ENCODE measurements at regions of chr6 and their contacts with region 1.

Region 1: DNA sequence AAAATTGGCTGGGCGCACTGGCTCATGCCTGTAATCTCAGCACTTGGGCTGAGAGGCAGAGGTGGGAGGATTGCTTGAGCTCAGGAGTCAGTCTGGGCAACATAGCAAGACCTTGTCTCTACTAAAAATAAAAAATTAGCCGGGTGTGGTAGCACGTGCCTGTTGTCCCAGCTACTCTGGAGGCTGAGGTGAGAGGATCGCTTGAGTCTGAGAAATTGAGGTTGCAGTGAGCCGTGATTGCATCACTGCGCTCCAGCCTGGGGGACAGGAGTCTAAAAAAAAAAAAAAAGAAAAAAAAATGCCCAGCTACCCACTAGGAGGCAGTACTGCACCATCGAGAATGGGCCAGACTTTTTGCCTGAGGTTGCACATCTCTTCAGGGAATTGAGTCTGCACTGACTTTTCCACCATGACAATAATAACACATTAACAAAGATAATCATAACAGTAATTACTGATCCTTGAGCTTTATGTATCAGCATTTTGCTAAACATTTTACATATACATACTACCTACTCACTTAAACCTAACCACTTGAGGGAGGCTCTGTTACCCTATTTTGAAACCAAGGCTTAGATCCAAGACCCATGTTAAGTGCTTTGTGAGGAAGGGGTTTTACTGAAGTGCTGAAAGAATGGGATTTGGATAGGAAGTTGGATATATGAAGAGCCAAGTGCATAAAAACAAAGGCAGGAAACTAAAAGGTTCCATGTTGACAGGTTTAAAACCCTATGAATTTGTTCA is 21.0 kb downstream of the SRSF3 start:
- DNase-seq: no peak
- ATAC-seq: peak; percentile 69
- H3K4me3 ChIP-seq: no peak overlapping the region
- H3K27ac ChIP-seq: no peak overlapping the region
- H3K4me1 ChIP-seq: peaks cover 6% of the 10 kb centered on the region
- H3K27me3 ChIP-seq: no peaks in the 10 kb centered on the region
- CTCF ChIP-seq: peak; percentile 74 to 84 (median 80)
- EP300 ChIP-seq: no peak
- POLR2A ChIP-seq: no peak
- RAD21 ChIP-seq: peak; percentile 97

Region 2: GRCh38 chr6:36599791-36600209 is 15.4 kb before region 1 on chr6:
- CTCF ChIA-PET with region 1: interaction called, 29 read pairs
- POLR2A ChIA-PET with region 1: interaction called, 9 read pairs
- RAD21 ChIA-PET with region 1: interaction called, 8 read pairs
- SMC1A ChIA-PET with region 1: interaction called, 50 read pairs
- in situ Hi-C with region 1: no loop called
- intact Hi-C with region 1: no loop called
- DNase-seq: no peak
- ATAC-seq: peak; percentile 84
- H3K4me3 ChIP-seq: peak overlapping the region; percentile 73
- H3K27ac ChIP-seq: no peak overlapping the region
- H3K4me1 ChIP-seq: peaks cover 3% of the 10 kb centered on the region; the same call in 1 of the 2 replicates
- H3K27me3 ChIP-seq: no peaks in the 10 kb centered on the region
- CTCF ChIP-seq: no peak
- EP300 ChIP-seq: no peak
- POLR2A ChIP-seq: peak; percentile 66
- RAD21 ChIP-seq: no peak

Region 3: GRCh38 chr6:36666726-36667591 is 51.8 kb after region 1 on chr6:
- CTCF ChIA-PET with region 1: interaction called, 30 read pairs
- POLR2A ChIA-PET with region 1: interaction called, 3 read pairs
- RAD21 ChIA-PET with region 1: interaction called, 7 read pairs
- SMC1A ChIA-PET with region 1: interaction called, 10 read pairs
- in situ Hi-C with region 1: no loop called
- intact Hi-C with region 1: no loop called
- DNase-seq: peak; percentile 91
- ATAC-seq: peak; percentile 86
- H3K4me3 ChIP-seq: peak overlapping the region; percentile 41; the same call in 1 of the 2 replicates
- H3K27ac ChIP-seq: peak overlapping the region; percentile 92
- H3K4me1 ChIP-seq: peaks cover 64% of the 10 kb centered on the region
- H3K27me3 ChIP-seq: no peaks in the 10 kb centered on the region
- CTCF ChIP-seq: no peak; a peak in 1 of 6 replicates
- EP300 ChIP-seq: peak; percentile 94 to 97
- POLR2A ChIP-seq: peak; percentile 49
- RAD21 ChIP-seq: no peak; the same call in 1 of the 2 replicates

Region 4: GRCh38 chr6:36701401-36701991 is 86.3 kb after region 1 on chr6:
- CTCF ChIA-PET with region 1: interaction called, 27 read pairs
- POLR2A ChIA-PET with region 1: no interaction called
- RAD21 ChIA-PET with region 1: interaction called, 3 read pairs
- SMC1A ChIA-PET with region 1: interaction called, 4 read pairs
- in situ Hi-C with region 1: no loop called
- intact Hi-C with region 1: no loop called
- DNase-seq: no peak
- ATAC-seq: peak; percentile 91
- H3K4me3 ChIP-seq: no peak overlapping the region
- H3K27ac ChIP-seq: no peak overlapping the region
- H3K4me1 ChIP-seq: no peaks in the 10 kb centered on the region
- H3K27me3 ChIP-seq: no peaks in the 10 kb centered on the region
- CTCF ChIP-seq: peak; percentile 41 to 52 (median 43); a peak in 5 of 6 replicates
- EP300 ChIP-seq: no peak
- POLR2A ChIP-seq: no peak
- RAD21 ChIP-seq: peak; percentile 58

Region 5: DNA sequence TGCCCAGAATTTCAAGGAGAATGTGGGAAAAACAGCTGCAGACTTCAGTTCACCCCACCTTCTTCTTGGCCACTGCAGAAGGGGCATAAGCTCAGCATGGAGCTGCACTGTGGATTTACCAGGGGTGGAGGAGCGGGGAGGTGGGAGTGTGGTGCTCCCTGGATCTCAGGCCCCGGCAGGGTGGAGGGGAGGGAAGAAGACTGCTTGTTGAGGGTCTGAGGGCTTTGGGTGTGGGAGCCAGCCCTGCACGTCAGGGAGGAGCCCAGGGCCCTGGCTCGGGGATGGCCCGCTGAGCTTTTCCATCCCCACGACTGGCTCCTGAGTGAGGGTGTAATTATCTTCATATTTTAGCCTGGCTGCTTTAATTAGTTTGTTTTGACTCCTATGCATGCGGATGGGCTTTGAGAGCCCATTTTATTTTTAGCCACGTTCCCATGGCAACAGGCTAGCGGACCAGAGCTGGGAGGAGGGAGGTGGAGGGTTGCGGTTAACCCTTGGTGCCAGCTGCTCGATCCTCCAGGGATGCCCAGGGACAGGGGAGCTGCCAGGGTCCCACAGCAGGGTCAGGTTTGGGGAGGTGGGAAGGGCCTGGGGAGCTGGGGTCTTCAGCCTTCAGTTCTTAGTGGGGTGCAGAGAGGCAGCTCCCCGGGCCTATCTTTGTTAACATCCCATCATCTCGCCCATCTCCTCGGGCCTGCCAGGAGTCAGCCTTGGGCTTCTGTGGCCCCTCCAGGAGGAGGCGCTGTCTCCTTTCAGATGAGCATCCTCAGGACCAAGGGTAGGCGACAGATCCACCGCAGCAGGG is 150.6 kb after region 1 on chr6:
- CTCF ChIA-PET with region 1: interaction called, 121 read pairs
- POLR2A ChIA-PET with region 1: no interaction called
- RAD21 ChIA-PET with region 1: interaction called, 95 read pairs
- SMC1A ChIA-PET with region 1: interaction called, 111 read pairs
- in situ Hi-C with region 1: no loop called
- intact Hi-C with region 1: no loop called
- DNase-seq: no peak
- ATAC-seq: peak; percentile 98
- H3K4me3 ChIP-seq: no peak overlapping the region
- H3K27ac ChIP-seq: no peak overlapping the region
- H3K4me1 ChIP-seq: peaks cover 17% of the 10 kb centered on the region
- H3K27me3 ChIP-seq: no peaks in the 10 kb centered on the region
- CTCF ChIP-seq: peak; percentile 97 to 98 (median 98); a peak in 5 of 6 replicates
- EP300 ChIP-seq: no peak
- POLR2A ChIP-seq: no peak
- RAD21 ChIP-seq: peak; percentile 98

Region 6: DNA sequence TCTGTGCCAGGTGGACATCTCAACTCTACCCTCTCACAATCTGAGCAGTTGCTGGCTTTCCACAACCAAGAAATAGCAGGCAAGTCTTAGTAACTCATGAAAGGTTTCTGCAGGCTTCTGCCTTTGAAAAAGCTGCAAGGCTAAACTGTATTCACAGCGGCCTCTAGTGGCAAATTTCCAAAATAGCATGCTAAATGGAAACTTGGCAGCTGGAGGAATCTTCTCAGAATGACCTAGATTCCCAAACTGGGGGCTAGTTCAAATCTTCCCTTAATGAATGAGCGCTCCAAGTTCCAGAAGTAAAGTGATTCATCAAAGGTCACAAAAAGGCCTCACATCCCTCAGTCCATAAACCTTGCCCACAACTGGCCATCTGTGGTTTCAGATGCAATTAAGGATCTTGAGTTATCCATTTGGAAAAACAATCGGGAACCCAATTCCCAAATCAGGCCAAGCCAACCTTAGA is 236.0 kb after region 1 on chr6:
- CTCF ChIA-PET with region 1: interaction called, 16 read pairs
- POLR2A ChIA-PET with region 1: no interaction called
- RAD21 ChIA-PET with region 1: interaction called, 7 read pairs
- SMC1A ChIA-PET with region 1: interaction called, 4 read pairs
- in situ Hi-C with region 1: no loop called
- intact Hi-C with region 1: loop called (anchors 10 kb)
- DNase-seq: no peak
- ATAC-seq: peak; percentile 46; the same call in 2 of the 3 replicates
- H3K4me3 ChIP-seq: no peak overlapping the region
- H3K27ac ChIP-seq: no peak overlapping the region
- H3K4me1 ChIP-seq: no peaks in the 10 kb centered on the region
- H3K27me3 ChIP-seq: no peaks in the 10 kb centered on the region
- CTCF ChIP-seq: peak; percentile 71 to 79 (median 77)
- EP300 ChIP-seq: no peak
- POLR2A ChIP-seq: no peak
- RAD21 ChIP-seq: peak; percentile 70

Region 7: GRCh38 chr6:37038292-37039198 is 423.4 kb after region 1 on chr6:
- CTCF ChIA-PET with region 1: no interaction called
- POLR2A ChIA-PET with region 1: no interaction called
- RAD21 ChIA-PET with region 1: no interaction called
- SMC1A ChIA-PET with region 1: no interaction called
- in situ Hi-C with region 1: no loop called
- intact Hi-C with region 1: no loop called
- DNase-seq: no peak
- ATAC-seq: no peak
- H3K4me3 ChIP-seq: no peak overlapping the region
- H3K27ac ChIP-seq: no peak overlapping the region
- H3K4me1 ChIP-seq: no peaks in the 10 kb centered on the region
- H3K27me3 ChIP-seq: no peaks in the 10 kb centered on the region
- CTCF ChIP-seq: no peak
- EP300 ChIP-seq: no peak
- POLR2A ChIP-seq: no peak
- RAD21 ChIP-seq: no peak